ENCODE measurements at regions of chr11 and their contacts with region 1.

Region 1: GRCh38 chr11:47964546-47964945 is 15.8 kb upstream of the PTPRJ start:
- DNase-seq: no peak
- ATAC-seq: no peak
- H3K4me3 ChIP-seq: no peak overlapping the region
- H3K4me3 Mint-ChIP-seq: no peak overlapping the region
- H3K27ac ChIP-seq: no peak overlapping the region
- H3K27ac Mint-ChIP-seq: no peak overlapping the region
- H3K4me1 ChIP-seq: no peaks in the 10 kb centered on the region
- H3K4me1 Mint-ChIP-seq: peaks cover 0 to 5% (median 0%) of the 10 kb centered on the region in 7 donors
- H3K27me3 ChIP-seq: no peaks in the 10 kb centered on the region
- H3K27me3 Mint-ChIP-seq: no peaks in the 10 kb centered on the region

Region 2: GRCh38 chr11:47928426-47928825 is 36.1 kb before region 1 on chr11:
- CTCF ChIA-PET with region 1: no interaction called
- POLR2A ChIA-PET with region 1: no interaction called
- intact Hi-C with region 1: no loop called
- DNase-seq: no peak
- ATAC-seq: peak; percentile 22
- H3K4me3 ChIP-seq: no peak overlapping the region
- H3K4me3 Mint-ChIP-seq: peak overlapping the region in 4 of 10 donors; percentile 1 to 37 (median 16)
- H3K27ac ChIP-seq: no peak overlapping the region
- H3K27ac Mint-ChIP-seq: peak overlapping the region in 2 of 9 donors; percentile 1 to 77
- H3K4me1 ChIP-seq: peaks cover 0 to 5% of the 10 kb centered on the region in 2 donors
- H3K4me1 Mint-ChIP-seq: peaks cover 6 to 26% (median 15%) of the 10 kb centered on the region in 7 donors
- H3K27me3 ChIP-seq: no peaks in the 10 kb centered on the region
- H3K27me3 Mint-ChIP-seq: peaks cover 0 to 2% (median 0%) of the 10 kb centered on the region in 5 donors

Region 3: GRCh38 chr11:47991266-47991830 is 26.8 kb after region 1 on chr11:
- CTCF ChIA-PET with region 1: no interaction called
- POLR2A ChIA-PET with region 1: no interaction called
- intact Hi-C with region 1: no loop called
- DNase-seq: no peak
- ATAC-seq: no peak
- H3K4me3 ChIP-seq: peak overlapping the region; percentile 28
- H3K4me3 Mint-ChIP-seq: peak overlapping the region; percentile 24 to 83 (median 72)
- H3K27ac ChIP-seq: peak overlapping the region; percentile 56
- H3K27ac Mint-ChIP-seq: peak overlapping the region; percentile 29 to 93 (median 79)
- H3K4me1 ChIP-seq: peaks cover 6 to 12% of the 10 kb centered on the region in 2 donors
- H3K4me1 Mint-ChIP-seq: peaks cover 11 to 73% (median 62%) of the 10 kb centered on the region in 7 donors
- H3K27me3 ChIP-seq: no peaks in the 10 kb centered on the region
- H3K27me3 Mint-ChIP-seq: no peaks in the 10 kb centered on the region

Region 4: DNA sequence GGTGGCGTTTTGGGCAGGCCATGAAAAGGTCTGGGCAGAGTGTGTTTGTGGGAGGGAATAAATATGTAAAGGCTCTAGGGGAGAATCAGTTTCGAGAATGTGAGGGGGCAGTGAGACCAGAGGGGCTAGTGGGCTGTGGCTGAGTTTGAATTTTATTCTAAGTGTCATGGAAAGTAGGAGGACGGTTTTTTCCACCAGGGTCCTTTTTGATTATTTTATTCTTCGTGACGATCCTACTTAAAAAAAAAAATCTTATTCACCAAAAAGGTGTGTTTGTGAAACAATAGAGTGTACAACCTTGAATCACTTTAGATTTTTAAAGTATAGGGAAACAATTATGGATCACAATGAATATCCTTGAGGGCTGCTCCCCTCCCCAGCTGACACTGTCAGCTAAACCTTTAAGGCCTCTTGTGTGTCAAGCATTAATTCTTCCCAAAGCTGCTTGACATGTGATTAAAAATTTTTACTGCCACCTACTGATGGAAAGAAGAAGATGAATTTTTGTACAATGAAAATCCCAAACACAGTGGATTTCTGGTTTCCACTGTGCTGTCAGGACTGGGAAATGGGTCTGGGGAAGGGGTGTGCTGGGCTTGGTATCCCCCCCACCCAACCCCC is 144.6 kb after region 1 on chr11:
- CTCF ChIA-PET with region 1: interaction called, 12 read pairs
- POLR2A ChIA-PET with region 1: no interaction called
- intact Hi-C with region 1: loop called in 1 of 2 experiments (anchors 1 kb)
- DNase-seq: peak in 6 of 9 donors; percentile 20 to 50 (median 32)
- ATAC-seq: peak; percentile 57
- H3K4me3 ChIP-seq: peak overlapping the region; percentile 26
- H3K4me3 Mint-ChIP-seq: peak overlapping the region; percentile 38 to 86 (median 76)
- H3K27ac ChIP-seq: peak overlapping the region; percentile 30
- H3K27ac Mint-ChIP-seq: peak overlapping the region in 8 of 9 donors; percentile 14 to 90 (median 80)
- H3K4me1 ChIP-seq: peaks cover 18 to 27% of the 10 kb centered on the region in 2 donors
- H3K4me1 Mint-ChIP-seq: peaks cover 32 to 59% (median 49%) of the 10 kb centered on the region in 7 donors
- H3K27me3 ChIP-seq: no peaks in the 10 kb centered on the region
- H3K27me3 Mint-ChIP-seq: no peaks in the 10 kb centered on the region

Measured in naive thymus-derived CD4-positive, alpha-beta T cell (primary cell).